Astrocyte of the spinal cord (primary cell): ENCODE measurements at regions of chr5 and their contacts with region 1.

Region 1: DNA sequence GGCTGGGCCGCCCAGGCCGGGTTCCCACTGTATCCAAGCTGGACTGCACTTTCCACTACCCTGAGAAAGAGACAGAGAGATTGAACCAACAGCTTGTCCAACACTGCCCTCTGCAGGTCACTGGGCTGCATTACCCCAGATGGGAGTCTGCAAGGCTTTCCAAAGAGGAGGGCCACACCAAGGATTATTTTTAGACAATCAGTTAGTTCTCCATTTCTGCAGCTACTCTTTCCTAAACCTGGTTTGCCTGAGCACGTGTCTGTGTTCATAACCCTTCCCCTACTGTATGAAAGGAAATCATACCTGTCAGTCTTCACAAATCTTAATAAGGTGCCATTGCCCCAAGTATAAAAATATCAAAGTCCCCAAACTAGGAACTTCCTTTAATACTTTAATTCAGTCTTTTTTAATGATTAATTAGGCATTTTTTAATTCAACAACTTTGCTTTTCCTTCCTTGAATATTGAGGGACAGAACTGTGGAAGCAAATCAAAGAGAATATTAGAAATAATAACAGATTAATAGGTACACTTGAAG is 13.4 kb upstream of the FGF1 start:
- DNase-seq: peak; percentile 86
- H3K4me3 ChIP-seq: no peak overlapping the region
- CTCF ChIP-seq: peak; percentile 98

Region 2: DNA sequence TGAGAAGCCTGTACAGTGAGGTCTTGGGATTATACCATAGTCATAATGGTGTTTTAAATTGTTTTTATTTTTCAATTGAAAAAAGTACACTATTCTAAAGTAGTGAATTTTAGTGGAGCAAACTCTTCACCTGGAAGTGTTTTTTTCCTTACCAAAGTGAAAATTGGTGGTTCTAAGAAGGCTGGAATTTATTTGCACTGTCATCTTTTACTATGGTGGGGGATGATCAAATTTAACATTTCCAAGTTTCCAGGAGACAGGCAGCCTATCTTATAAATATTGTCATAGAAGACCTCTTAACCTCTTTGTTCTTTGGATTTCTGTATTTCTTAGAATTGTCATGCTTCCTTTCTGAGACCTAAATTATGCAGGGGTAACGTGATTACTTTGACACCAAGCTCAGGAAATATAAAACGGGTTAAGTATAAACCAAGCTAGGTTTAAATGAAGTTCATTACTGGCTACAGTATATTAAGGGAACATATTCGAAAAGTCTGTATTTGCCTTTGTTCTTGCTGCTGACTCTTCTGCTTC is 570.5 kb before region 1 on chr5:
- in situ Hi-C with region 1: no loop called
- DNase-seq: no peak
- H3K4me3 ChIP-seq: no peak overlapping the region
- CTCF ChIP-seq: no peak

Region 3: GRCh38 chr5:142611154-142611553 is 88.1 kb before region 1 on chr5:
- in situ Hi-C with region 1: loop called (anchors 10 kb)
- DNase-seq: peak; percentile 65
- H3K4me3 ChIP-seq: no peak overlapping the region
- CTCF ChIP-seq: peak; percentile 94